Left lung (tissue), 14 donors: ENCODE measurements at regions of chr6 and their contacts with region 1.

Region 1: DNA sequence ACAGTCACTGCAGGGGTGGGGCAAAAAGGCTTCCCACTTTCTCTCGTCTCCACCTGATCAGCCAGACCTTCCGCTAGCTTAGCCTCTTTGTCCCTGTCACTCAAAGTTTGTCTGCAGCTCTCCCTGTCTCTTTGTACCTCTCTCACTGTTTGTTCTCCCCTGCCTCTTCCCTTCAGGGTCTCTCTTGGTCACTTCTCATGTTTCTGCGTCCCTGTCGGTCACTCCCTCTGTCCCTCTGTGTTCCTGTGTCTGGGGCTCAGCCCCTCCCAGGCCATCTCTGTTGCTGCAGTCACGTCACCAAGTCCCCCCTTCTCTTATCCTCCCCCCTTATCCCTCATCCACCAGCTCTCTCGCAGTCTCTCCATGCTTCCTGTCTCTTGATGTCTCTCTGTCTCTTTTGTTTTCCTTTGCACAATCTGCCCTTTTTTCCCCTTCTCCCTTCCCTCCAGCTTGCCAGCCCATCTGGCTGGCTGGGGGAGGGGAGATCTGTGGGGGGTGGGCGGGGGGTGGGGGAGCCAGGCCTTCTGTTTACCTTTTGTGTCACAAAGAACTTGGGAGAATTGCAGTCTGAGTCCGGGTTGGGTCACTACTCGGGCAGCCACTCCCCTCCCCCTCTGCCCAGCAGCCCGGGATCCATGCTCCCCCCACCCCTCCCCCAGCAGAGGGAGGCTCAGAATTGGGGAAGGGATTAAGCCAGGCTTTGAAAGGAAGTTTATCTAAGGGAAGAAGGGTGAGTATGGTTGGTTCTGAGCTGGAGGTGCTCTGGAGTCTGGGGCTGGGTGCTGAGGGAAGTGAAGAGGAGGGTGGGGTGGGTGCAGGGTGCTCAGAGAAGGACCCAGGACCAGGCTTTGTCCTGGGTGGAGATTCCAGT is 32.3 kb downstream of the FOXP4 start:
- DNase-seq: peak in 2 of 4 donors; percentile 32 to 69
- ATAC-seq: peak; percentile 18
- H3K4me3 ChIP-seq: no peak overlapping the region
- H3K27ac ChIP-seq: peak overlapping the region in 1 of 2 donors; percentile 31
- H3K4me1 ChIP-seq: peaks cover 15 to 25% of the 10 kb centered on the region in 2 donors
- H3K27me3 ChIP-seq: no peaks in the 10 kb centered on the region
- CTCF ChIP-seq: no peak

Region 2: GRCh38 chr6:41228616-41229015 is 349.8 kb before region 1 on chr6:
- intact Hi-C with region 1: loop called in 1 of 2 experiments (anchors 10 kb)
- DNase-seq: no peak
- ATAC-seq: peak; percentile 68
- H3K4me3 ChIP-seq: no peak overlapping the region
- H3K27ac ChIP-seq: no peak overlapping the region
- H3K4me1 ChIP-seq: peaks cover 0 to 7% of the 10 kb centered on the region in 2 donors
- H3K27me3 ChIP-seq: peaks cover 0 to 16% of the 10 kb centered on the region in 2 donors
- CTCF ChIP-seq: peak in 1 of 2 donors; percentile 12

Region 3: GRCh38 chr6:41463062-41463930 is 115.2 kb before region 1 on chr6:
- intact Hi-C with region 1: no loop called
- DNase-seq: peak in 2 of 4 donors; percentile 64 to 80
- ATAC-seq: peak; percentile 97
- H3K4me3 ChIP-seq: no peak overlapping the region
- H3K27ac ChIP-seq: no peak overlapping the region
- H3K4me1 ChIP-seq: no peaks in the 10 kb centered on the region
- H3K27me3 ChIP-seq: peaks cover 0 to 13% of the 10 kb centered on the region in 2 donors
- CTCF ChIP-seq: peak; percentile 44 to 56

Region 4: GRCh38 chr6:42269553-42269952 is 691.1 kb after region 1 on chr6:
- intact Hi-C with region 1: no loop called
- DNase-seq: no peak
- ATAC-seq: no peak
- H3K4me3 ChIP-seq: no peak overlapping the region
- H3K27ac ChIP-seq: no peak overlapping the region
- H3K4me1 ChIP-seq: no peaks in the 10 kb centered on the region
- H3K27me3 ChIP-seq: no peaks in the 10 kb centered on the region
- CTCF ChIP-seq: no peak